AG04449 (cell line): ENCODE measurements at regions of chr1 and their contacts with region 1.

Region 1: GRCh38 chr1:151340870-151341754 is 5.9 kb downstream of the RFX5 start:
- DNase-seq: peak; percentile 45
- H3K4me3 ChIP-seq: no peak overlapping the region
- CTCF ChIP-seq: peak; percentile 46

Region 2: GRCh38 chr1:151196292-151196800 is 144.8 kb before region 1 on chr1:
- CTCF ChIA-PET with region 1: interaction called, 27 read pairs
- POLR2A ChIA-PET with region 1: no interaction called
- DNase-seq: no peak
- H3K4me3 ChIP-seq: peak overlapping the region; percentile 23; the same call in 1 of the 2 replicates
- CTCF ChIP-seq: peak; percentile 44

Region 3: GRCh38 chr1:151281969-151282882 is 58.9 kb before region 1 on chr1 and contains the start of gene ZNF687:
- CTCF ChIA-PET with region 1: interaction called, 20 read pairs
- POLR2A ChIA-PET with region 1: interaction called, 4 read pairs
- DNase-seq: peak; percentile 100
- H3K4me3 ChIP-seq: peak within 1 kb of the TSS; percentile 97
- CTCF ChIP-seq: no peak

Region 4: GRCh38 chr1:151327223-151327902 is 13.7 kb before region 1 on chr1 and contains the start of gene PI4KB:
- CTCF ChIA-PET with region 1: interaction called, 235 read pairs
- POLR2A ChIA-PET with region 1: interaction called, 3 read pairs
- DNase-seq: peak; percentile 82
- H3K4me3 ChIP-seq: peak within 1 kb of the TSS; percentile 81
- CTCF ChIP-seq: no peak

Region 5: DNA sequence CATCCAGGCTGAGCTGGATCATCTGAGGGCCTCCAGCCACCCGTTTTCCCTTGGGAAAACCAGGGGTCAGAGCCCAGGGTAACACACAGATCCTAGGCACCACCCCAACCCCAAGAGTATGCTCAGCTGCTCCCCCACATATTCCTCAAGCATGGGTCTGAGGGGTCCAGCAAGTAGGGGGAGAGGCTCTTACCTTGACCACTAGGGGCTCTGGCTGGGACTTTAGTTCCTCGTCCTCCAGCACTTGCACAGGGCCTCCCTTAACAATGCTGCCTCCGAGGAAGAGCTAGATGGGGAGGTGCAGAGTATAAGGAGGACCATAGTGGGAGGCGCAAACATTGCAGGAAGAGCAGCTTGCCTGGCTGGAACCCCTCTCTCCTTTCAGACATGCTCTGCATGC is 23.9 kb after region 1 on chr1:
- CTCF ChIA-PET with region 1: interaction called, 10 read pairs
- POLR2A ChIA-PET with region 1: no interaction called
- DNase-seq: no peak
- H3K4me3 ChIP-seq: no peak overlapping the region
- CTCF ChIP-seq: no peak

Region 6: DNA sequence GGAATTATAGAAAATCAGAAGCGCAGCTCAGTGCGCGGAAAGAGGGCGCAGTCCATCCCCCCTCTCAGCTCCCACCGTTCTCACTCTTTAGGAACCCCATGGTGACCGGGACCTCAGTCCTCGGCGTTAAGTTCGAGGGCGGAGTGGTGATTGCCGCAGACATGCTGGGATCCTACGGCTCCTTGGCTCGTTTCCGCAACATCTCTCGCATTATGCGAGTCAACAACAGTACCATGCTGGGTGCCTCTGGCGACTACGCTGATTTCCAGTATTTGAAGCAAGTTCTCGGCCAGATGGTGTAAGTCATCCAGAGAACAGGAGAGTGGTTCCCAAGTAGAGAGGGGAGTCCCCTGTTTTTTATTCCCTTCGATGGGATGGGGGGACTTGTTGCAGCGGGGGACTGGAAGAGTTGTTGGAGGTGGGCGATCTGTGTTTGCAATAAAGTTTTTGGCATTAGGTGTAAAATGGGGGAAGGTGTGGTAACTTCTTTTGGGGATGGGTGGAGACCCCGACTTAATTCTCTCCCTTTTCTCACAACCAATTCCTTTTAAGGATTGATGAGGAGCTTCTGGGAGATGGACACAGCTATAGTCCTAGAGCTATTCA is 58.9 kb after region 1 on chr1:
- CTCF ChIA-PET with region 1: interaction called, 13 read pairs
- POLR2A ChIA-PET with region 1: no interaction called
- DNase-seq: no peak
- H3K4me3 ChIP-seq: peak overlapping the region; percentile 96
- CTCF ChIP-seq: no peak

Region 7: GRCh38 chr1:151547119-151547899 is 206.2 kb after region 1 on chr1:
- CTCF ChIA-PET with region 1: no interaction called
- POLR2A ChIA-PET with region 1: no interaction called
- DNase-seq: peak; percentile 86
- H3K4me3 ChIP-seq: peak overlapping the region; percentile 21; the same call in 1 of the 2 replicates
- CTCF ChIP-seq: no peak